Mammary epithelial cell (primary cell): ENCODE measurements at regions of chr3 and their contacts with region 1.

Region 1: DNA sequence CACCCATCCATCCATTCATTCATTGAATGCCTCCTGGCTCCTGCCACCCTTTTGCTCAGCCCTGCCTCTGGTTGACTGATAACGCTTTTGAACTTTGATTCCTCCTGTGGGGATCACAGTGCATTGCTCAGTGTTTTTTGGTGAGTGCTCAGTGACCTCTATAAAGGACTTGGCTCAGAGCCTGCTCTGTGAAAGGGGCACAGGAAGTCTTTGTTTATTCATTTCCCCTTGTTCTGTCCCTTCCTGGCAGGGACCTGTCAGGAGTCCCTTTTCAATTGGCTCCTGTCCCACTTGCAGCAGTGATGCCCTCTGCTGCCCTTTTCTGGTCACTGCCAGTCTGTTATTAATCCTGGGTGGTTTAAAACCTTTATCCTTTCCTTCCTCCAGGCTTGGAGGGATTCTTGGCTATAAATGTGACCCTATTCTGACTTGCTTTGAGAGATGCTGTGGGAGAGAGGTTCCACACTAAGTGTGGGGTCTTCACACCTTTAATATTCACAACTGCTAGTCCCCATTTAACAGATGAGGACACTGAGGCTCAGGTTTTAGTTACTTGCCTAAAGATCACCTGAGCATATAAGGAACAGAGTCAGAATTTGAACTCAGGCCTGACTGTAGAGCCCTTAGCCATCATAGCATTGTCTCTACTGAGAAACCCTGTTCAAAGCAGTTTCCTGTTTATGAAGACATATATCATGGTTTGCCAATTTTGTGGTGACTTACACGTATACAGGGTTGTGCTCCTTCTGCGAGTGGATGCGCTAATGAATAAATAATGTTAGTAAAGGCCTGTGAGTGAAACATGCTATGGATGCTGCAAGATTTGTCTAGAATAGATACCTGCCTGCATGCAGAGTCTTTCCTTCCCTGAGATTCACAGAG is 23.2 kb upstream of the TATDN2 start:
- DNase-seq: peak; percentile 64
- H3K4me3 ChIP-seq: no peak overlapping the region
- H3K27ac ChIP-seq: no peak overlapping the region
- H3K4me1 ChIP-seq: peaks cover 20% of the 10 kb centered on the region
- H3K27me3 ChIP-seq: no peaks in the 10 kb centered on the region
- CTCF ChIP-seq: peak; percentile 84 to 85

Region 2: GRCh38 chr3:9897408-9898372 is 327.3 kb before region 1 on chr3:
- CTCF ChIA-PET with region 1: no interaction called
- dilution Hi-C with region 1: no loop called
- in situ Hi-C with region 1: no loop called
- intact Hi-C with region 1: no loop called
- DNase-seq: peak; percentile 92
- H3K4me3 ChIP-seq: no peak overlapping the region
- H3K27ac ChIP-seq: peak overlapping the region; percentile 35
- H3K4me1 ChIP-seq: peaks cover 43% of the 10 kb centered on the region
- H3K27me3 ChIP-seq: no peaks in the 10 kb centered on the region
- CTCF ChIP-seq: no peak

Region 3: DNA sequence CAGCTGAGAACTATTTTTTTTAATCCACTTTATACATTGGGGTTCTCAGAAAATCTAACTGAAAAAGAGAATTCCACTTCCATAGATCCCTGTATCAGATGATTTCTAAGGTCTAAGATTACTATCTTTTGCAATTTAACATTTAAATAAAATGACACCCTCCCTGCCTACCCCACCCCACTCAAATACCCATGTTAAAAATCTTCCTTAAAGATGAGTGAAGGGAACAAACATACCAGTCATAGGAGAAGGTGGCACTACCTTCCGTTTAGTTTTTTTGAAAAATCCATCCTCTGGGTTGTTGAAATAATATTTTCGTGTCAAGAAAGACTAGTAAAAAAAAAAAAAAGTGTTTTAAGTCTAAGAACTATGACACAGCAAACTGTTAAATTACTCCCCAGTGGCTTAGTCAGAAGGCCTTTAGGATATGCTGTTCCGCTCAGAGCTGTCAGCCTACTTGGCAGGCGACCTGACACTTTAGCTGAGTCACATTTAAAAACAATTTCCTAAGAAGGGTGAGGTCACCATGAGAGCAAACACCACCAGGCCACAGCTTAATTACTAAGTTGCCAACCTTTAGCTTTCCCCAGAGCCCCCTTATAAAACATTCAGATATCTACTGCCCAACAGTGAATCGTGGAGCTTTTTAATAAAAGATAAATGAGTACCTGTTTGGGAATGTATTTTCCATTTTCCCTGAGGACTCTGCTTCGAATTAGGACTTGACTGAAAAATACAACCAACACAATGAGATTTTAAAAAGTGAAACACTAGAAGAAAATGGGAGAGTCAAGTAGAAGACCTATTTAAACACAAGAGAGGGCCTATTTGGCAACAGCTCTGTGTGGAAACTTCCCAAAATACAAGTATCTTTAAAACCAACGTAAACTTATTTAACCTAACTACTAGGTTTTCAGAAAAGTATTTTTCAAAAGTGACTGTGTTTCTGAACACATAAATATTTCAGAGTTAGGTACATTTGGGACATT is 248.0 kb before region 1 on chr3:
- CTCF ChIA-PET with region 1: no interaction called
- dilution Hi-C with region 1: no loop called
- in situ Hi-C with region 1: no loop called
- intact Hi-C with region 1: loop called (anchors 5 kb)
- DNase-seq: peak; percentile 94
- H3K4me3 ChIP-seq: no peak overlapping the region
- H3K27ac ChIP-seq: peak overlapping the region; percentile 62
- H3K4me1 ChIP-seq: peaks cover 15% of the 10 kb centered on the region
- H3K27me3 ChIP-seq: no peaks in the 10 kb centered on the region
- CTCF ChIP-seq: no peak

Region 4: GRCh38 chr3:10115326-10116137 is 109.5 kb before region 1 on chr3 and contains the start of gene BRK1:
- CTCF ChIA-PET with region 1: no interaction called
- dilution Hi-C with region 1: no loop called
- in situ Hi-C with region 1: no loop called
- intact Hi-C with region 1: loop called (anchors 1 kb)
- DNase-seq: peak; percentile 93
- H3K4me3 ChIP-seq: peak within 1 kb of the TSS; percentile 82 to 99 (median 88)
- H3K27ac ChIP-seq: peak within 1 kb of the TSS; percentile 77
- H3K4me1 ChIP-seq: peaks cover 8% of the 10 kb centered on the region
- H3K27me3 ChIP-seq: no peaks in the 10 kb centered on the region
- CTCF ChIP-seq: no peak
- total RNA-seq, gene BRK1: 80.4 to 134 TPM

Region 5: GRCh38 chr3:10142707-10143566 is 82.1 kb before region 1 on chr3:
- CTCF ChIA-PET with region 1: no interaction called
- dilution Hi-C with region 1: no loop called
- in situ Hi-C with region 1: no loop called
- intact Hi-C with region 1: loop called (anchors 1 kb)
- DNase-seq: peak; percentile 29
- H3K4me3 ChIP-seq: peak overlapping the region; percentile 48 to 95 (median 67)
- H3K27ac ChIP-seq: no peak overlapping the region
- H3K4me1 ChIP-seq: peaks cover 7% of the 10 kb centered on the region
- H3K27me3 ChIP-seq: no peaks in the 10 kb centered on the region
- CTCF ChIP-seq: no peak

Region 6: GRCh38 chr3:10164546-10165393 is 60.3 kb before region 1 on chr3 and contains the start of gene IRAK2:
- CTCF ChIA-PET with region 1: no interaction called
- dilution Hi-C with region 1: no loop called
- in situ Hi-C with region 1: no loop called
- intact Hi-C with region 1: loop called (anchors 1 kb)
- DNase-seq: peak; percentile 49
- H3K4me3 ChIP-seq: peak within 1 kb of the TSS; percentile 79 to 100 (median 95)
- H3K27ac ChIP-seq: peak within 1 kb of the TSS; percentile 21
- H3K4me1 ChIP-seq: peaks cover 5% of the 10 kb centered on the region
- H3K27me3 ChIP-seq: no peaks in the 10 kb centered on the region
- CTCF ChIP-seq: peak; percentile 38 to 67
- total RNA-seq, gene IRAK2: 2.5 to 16.9 TPM

Region 7: GRCh38 chr3:10192953-10193691 is 31.9 kb before region 1 on chr3:
- CTCF ChIA-PET with region 1: interaction called, 4 read pairs
- dilution Hi-C with region 1: no loop called
- in situ Hi-C with region 1: no loop called
- intact Hi-C with region 1: loop called (anchors 2 kb)
- DNase-seq: peak; percentile 64
- H3K4me3 ChIP-seq: no peak overlapping the region
- H3K27ac ChIP-seq: peak overlapping the region; percentile 99
- H3K4me1 ChIP-seq: peaks cover 68% of the 10 kb centered on the region
- H3K27me3 ChIP-seq: no peaks in the 10 kb centered on the region
- CTCF ChIP-seq: peak; percentile 49 to 51